ENCODE measurements at regions of chr17 and their contacts with region 1.

Region 1: DNA sequence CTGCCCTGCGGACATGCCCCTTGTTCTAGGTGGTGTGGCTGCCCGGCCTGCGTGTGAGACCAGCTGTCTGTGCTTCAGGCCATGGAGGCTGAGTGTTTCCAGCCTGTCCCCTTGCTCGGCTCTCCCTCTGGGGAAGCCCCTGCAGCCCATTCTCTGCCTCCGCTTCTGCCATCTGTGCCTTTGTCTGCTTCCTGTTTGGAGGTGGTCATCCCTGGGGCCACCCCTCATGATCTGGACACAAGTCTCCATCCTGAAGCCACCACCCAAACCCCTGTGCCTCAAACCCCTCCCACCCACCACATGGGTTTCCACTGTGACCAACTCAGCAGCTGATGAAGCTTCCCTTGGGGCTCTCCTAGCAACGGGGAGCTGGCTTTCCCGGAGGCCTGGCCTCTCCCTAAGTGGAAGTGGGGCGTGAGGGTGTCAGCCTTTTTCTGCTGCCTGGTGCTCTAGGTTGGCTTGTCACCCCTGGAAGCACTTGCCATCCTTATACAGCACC is 184.9 kb downstream of the SEC14L1 start:
- DNase-seq: no peak
- ATAC-seq: no peak

Region 2: DNA sequence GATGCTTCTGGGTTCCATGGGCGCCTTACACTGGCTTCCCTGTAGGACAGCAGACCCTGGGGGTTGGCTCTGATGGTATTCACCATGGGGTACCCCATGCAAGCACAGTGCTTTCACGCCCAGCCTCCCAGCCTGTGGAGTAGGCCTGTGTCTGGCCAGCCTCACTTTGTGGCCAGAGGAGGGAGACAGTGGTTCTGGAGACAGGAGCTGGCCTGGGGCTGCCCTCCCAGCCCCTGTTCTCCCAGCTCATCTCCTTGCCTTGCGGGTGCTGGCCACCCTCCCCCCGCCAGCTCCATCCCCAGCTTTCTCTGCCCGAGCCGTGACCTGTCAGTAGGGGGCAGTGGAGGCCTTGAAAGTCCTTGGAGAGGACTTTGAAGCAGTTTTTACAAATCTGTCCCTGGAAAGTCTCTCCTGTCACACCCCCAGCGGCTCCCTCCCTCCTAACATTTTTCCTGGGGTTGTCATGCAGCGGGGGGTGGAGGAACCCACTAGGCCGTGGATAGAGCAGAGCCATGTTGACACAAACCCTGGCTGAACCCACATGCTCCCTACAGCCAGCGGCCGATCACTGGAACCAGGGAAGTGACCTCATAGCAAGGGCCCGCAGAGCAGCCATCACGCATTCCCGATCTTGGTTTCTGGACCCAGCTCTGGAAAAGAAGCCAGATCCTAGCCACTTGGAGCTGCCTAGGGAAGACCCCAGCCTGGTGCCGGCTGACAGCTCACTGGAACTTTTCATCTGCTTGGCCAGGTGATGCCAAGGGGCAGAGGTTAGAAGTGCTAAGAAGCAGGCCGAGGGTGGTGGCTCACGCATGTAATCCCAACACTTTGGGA is 104.5 kb after region 1 on chr17:
- intact Hi-C with region 1: loop called (anchors 5 kb)
- DNase-seq: peak; percentile 96
- ATAC-seq: peak; percentile 81

Region 3: GRCh38 chr17:77494664-77495435 is 169.2 kb after region 1 on chr17:
- intact Hi-C with region 1: loop called (anchors 5 kb)
- DNase-seq: peak; percentile 89
- ATAC-seq: peak; percentile 76

Region 4: GRCh38 chr17:77700165-77700881 is 374.7 kb after region 1 on chr17:
- intact Hi-C with region 1: no loop called
- DNase-seq: no peak
- ATAC-seq: no peak

Measured in sciatic nerve (tissue), 2 donors.